Ovary (tissue), 10 donors: ENCODE measurements at regions of chr13 and their contacts with region 1.

Region 1: DNA sequence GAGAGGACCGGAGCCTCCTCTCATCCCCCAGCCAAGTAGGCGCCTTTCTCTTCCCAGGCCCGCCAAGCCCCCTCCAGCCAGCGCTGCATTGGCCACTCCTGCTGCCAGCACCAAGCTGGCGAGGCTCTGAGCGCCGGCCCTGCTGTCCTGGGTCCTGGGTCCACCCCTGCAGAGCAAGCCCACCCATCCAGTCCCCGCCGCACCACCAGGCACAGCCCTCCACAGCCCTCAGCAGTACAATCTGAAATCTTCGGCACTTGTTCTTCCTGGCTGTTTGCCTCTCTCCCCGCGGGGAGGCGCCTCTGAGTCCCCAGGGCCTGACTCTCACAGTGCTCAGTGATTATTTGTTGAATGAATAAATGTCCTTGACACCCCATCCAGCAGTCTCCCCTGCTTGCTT is 236.4 kb upstream of the SGCG start:
- DNase-seq: no peak
- H3K4me3 ChIP-seq: no peak overlapping the region
- H3K27ac ChIP-seq: no peak overlapping the region
- H3K4me1 ChIP-seq: no peaks in the 10 kb centered on the region
- H3K27me3 ChIP-seq: no peaks in the 10 kb centered on the region
- CTCF ChIP-seq: no peak
- EP300 ChIP-seq: no peak
- POLR2A ChIP-seq: no peak

Region 2: GRCh38 chr13:24360106-24360505 is 1415.7 kb after region 1 on chr13:
- intact Hi-C with region 1: loop called in 1 of 4 experiments (anchors 10 kb)
- DNase-seq: no peak
- H3K4me3 ChIP-seq: no peak overlapping the region
- H3K27ac ChIP-seq: no peak overlapping the region
- H3K4me1 ChIP-seq: no peaks in the 10 kb centered on the region
- H3K27me3 ChIP-seq: no peaks in the 10 kb centered on the region
- CTCF ChIP-seq: no peak
- EP300 ChIP-seq: no peak
- POLR2A ChIP-seq: no peak